ENCODE measurements at regions of chr2 and their contacts with region 1.

Region 1: DNA sequence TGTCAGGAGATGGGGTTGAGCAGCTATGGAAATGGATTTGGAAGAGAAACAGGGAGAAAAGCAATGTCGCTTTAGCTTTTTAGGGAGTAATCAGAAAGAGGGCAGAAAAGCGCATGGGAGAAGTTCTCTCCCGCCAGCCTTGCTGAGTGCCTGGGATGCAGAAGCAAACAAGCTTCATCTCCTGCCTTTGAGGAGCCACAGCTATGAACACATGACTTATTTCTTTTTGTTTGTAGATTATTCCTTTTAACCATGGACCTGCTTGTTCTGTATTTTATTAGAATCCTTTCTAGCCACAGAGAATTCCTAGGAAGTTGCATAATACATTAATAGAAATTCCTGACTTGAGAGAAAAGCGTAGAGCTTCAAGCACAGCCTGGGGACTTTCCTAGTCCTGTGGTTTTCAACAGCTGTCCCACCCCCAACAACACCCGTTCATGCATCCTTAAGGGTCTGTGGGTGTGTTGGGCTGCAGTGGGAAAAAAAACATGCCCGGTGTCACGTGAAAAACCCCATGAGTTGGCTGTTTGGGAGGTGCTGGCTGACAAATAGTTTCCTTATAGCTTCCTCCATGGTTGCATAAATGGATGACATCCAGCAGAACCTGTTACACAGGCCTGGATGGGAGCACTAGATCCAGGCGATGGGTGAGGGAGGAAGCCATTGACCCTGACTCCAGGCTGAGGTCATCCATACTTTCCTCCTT is 14.9 kb downstream of the SLC9A4 start:
- DNase-seq: no peak
- ATAC-seq: no peak

Region 2: GRCh38 chr2:102522890-102523289 is 35.0 kb after region 1 on chr2:
- intact Hi-C with region 1: no loop called
- DNase-seq: no peak
- ATAC-seq: no peak

Region 3: DNA sequence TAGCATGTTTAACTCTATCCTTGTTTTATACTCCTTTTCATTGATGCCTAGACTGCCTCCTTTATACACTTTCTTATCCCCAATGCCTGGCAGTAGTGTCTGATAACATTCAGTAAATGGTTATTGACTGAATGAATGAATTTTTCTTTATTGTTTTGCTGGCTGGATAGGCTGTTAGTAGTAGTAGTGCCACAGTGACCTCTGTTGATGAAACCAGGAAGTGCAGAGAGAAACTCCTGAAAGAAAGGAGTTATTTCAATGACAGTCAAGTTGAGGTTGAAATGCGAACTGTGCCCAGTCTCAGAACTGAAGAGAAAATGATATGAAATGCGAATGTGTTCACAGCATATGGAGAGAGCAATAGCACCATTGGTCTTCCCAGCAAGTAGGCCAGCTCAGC is 104.7 kb after region 1 on chr2:
- intact Hi-C with region 1: loop called (anchors 10 kb)
- DNase-seq: no peak
- ATAC-seq: no peak